PC-9 (cell line): ENCODE measurements at regions of chr4 and their contacts with region 1.

Region 1: GRCh38 chr4:32226204-32226603 is 1506.0 kb downstream of the PCDH7 start:
- DNase-seq: no peak
- H3K4me3 ChIP-seq: no peak overlapping the region
- H3K27ac ChIP-seq: no peak overlapping the region
- H3K4me1 ChIP-seq: no peaks in the 10 kb centered on the region
- H3K27me3 ChIP-seq: no peaks in the 10 kb centered on the region
- CTCF ChIP-seq: no peak

Region 2: DNA sequence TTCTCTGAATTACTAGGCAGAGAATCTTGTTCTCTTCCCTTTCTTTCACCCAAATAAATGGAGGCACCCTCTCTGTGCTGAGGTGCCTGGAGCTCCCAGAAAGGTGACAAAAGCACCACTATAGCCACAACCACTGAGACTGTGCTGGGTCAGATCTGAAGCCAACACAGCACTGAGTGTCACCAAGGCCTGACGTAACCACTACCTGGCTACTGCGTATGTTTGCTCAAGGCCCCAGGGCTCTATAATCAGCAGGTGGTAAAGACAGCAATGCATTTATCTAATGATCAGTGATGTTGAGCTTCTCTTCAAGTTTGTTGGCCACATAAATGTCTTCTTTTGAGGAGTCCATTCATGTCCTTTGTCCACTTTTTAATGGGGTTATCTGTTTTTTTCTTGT is 425.5 kb before region 1 on chr4:
- CTCF ChIA-PET with region 1: no interaction called
- POLR2A ChIA-PET with region 1: interaction called, 29 read pairs
- intact Hi-C with region 1: no loop called
- DNase-seq: no peak
- H3K4me3 ChIP-seq: no peak overlapping the region
- H3K27ac ChIP-seq: no peak overlapping the region
- H3K4me1 ChIP-seq: no peaks in the 10 kb centered on the region
- H3K27me3 ChIP-seq: no peaks in the 10 kb centered on the region
- CTCF ChIP-seq: no peak

Region 3: DNA sequence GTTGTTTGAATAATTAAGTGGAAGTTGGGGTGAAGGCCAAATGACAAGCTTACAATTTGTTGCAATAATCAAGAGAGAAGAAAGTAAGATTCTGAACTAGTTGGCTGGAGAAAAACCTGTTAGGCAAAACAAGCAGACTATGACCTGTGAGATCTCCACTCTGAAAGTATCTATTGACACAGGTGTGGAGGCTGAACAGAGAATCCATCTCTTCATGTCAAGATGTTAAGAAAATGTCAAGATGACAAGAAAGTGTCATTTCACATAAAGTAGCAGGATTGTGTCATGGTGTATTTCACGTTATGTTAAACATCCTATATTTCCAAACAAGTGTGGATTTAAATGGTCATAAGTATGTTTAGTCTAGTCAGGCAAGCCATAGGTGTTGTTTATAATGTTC is 234.3 kb before region 1 on chr4:
- CTCF ChIA-PET with region 1: no interaction called
- POLR2A ChIA-PET with region 1: no interaction called
- intact Hi-C with region 1: no loop called
- DNase-seq: no peak
- H3K4me3 ChIP-seq: no peak overlapping the region
- H3K27ac ChIP-seq: no peak overlapping the region
- H3K4me1 ChIP-seq: no peaks in the 10 kb centered on the region
- H3K27me3 ChIP-seq: no peaks in the 10 kb centered on the region
- CTCF ChIP-seq: no peak